ENCODE measurements at regions of chr15 and their contacts with region 1.

Region 1: DNA sequence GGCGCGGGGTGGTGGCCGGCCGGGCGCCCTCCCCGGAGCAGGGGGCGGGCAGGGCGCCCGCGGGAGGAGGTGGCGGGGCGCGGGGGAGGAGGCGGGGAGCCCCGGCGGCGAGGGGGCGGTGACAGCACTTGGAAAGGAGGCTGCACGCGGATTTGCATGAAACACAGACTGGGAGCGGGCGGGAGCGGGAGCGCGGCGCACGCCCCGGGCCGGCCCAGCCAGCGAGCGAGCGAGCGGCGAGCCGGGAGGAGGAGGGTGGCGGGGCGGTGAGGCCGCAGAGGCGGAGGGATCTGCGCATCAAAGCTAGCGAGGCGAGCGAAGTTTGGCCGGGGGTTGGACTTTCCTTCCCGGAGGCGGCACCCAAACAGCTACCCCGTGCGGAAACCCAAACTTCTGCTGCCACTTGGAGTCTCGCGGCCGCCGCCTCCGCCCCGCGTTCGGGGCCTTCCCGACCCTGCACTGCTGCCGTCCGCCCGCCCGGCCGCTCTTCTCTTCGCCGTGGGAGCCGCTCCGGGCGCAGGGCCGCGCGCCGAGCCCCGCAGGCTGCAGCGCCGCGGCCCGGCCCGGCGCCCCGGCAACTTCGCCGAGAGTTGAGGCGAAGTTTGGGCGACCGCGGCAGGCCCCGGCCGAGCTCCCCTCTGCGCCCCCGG is at the start of gene SMAD3:
- DNase-seq: peak; percentile 93
- H3K4me3 ChIP-seq: peak within 1 kb of the TSS; percentile 41 to 90 (median 78)
- H3K27ac ChIP-seq: peak within 1 kb of the TSS; percentile 92 to 96 (median 94)
- H3K4me1 ChIP-seq: peaks cover 40 to 72% (median 50%) of the 10 kb centered on the region in 4 donors
- H3K27me3 ChIP-seq: no peaks in the 10 kb centered on the region
- CTCF ChIP-seq: no peak
- EP300 ChIP-seq: no peak
- POLR2A ChIP-seq: peak; percentile 81
- total RNA-seq, gene SMAD3: 30.9 to 65.1 (median 57.0) TPM

Region 2: GRCh38 chr15:66545249-66545648 is 520.3 kb before region 1 on chr15:
- in situ Hi-C with region 1: no loop called
- intact Hi-C with region 1: no loop called
- DNase-seq: no peak
- H3K4me3 ChIP-seq: no peak overlapping the region
- H3K27ac ChIP-seq: no peak overlapping the region
- H3K4me1 ChIP-seq: no peaks in the 10 kb centered on the region
- H3K27me3 ChIP-seq: no peaks in the 10 kb centered on the region
- CTCF ChIP-seq: no peak
- EP300 ChIP-seq: no peak
- POLR2A ChIP-seq: no peak

Region 3: GRCh38 chr15:66735909-66736305 is 329.7 kb before region 1 on chr15:
- in situ Hi-C with region 1: no loop called
- intact Hi-C with region 1: no loop called
- DNase-seq: no peak
- H3K4me3 ChIP-seq: no peak overlapping the region
- H3K27ac ChIP-seq: no peak overlapping the region
- H3K4me1 ChIP-seq: peaks cover 7 to 34% (median 14%) of the 10 kb centered on the region in 4 donors
- H3K27me3 ChIP-seq: no peaks in the 10 kb centered on the region
- CTCF ChIP-seq: no peak
- EP300 ChIP-seq: no peak
- POLR2A ChIP-seq: no peak

Region 4: DNA sequence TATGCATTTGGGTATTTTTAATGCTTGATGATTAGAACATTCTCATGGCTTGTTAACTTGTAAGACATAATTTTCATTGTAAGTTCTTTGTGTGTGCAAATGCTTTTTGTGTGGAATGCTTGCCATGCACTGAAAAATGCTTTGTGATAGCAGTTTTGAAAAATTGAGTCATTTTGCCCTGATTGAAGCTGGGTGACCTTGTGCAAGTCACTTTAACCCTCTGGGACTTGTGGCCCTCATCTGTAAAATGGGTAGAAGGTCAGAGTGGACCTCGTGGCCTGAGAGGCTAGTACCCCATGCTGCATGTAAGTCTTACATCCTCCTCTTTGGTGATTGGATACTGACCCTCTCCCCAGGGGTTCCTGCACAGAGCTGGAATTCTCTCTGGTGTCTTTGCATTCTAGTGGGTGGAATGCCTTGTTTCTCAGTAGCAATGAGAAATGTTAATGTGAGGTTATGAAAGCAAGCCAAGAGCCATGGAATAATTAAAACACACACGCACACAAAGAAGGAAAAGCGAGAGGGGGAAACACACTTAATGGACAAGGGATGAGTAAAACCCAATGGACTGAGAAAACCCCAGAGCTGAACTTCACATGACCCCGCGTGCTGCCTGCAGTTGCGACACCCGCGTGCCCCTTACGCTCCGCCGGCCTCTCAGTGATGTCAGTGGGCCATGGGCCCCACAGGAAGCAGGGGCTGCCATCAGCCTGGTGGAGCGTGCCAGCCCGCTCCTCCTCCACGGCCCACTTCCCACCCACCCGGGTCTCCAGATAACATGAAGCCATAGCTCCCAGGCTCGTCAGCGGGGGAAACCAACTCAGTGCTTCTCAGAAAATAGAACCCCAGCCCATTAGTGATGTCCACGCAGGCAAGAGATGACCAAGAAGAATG is 43.8 kb after region 1 on chr15:
- in situ Hi-C with region 1: no loop called
- intact Hi-C with region 1: loop called (anchors 5 kb)
- DNase-seq: peak; percentile 65
- H3K4me3 ChIP-seq: no peak overlapping the region
- H3K27ac ChIP-seq: peak overlapping the region; percentile 58 to 80 (median 76)
- H3K4me1 ChIP-seq: peaks cover 38 to 57% (median 50%) of the 10 kb centered on the region in 4 donors
- H3K27me3 ChIP-seq: no peaks in the 10 kb centered on the region
- CTCF ChIP-seq: no peak
- EP300 ChIP-seq: no peak
- POLR2A ChIP-seq: no peak

Region 5: GRCh38 chr15:67174446-67174845 is 108.9 kb after region 1 on chr15:
- in situ Hi-C with region 1: no loop called
- intact Hi-C with region 1: no loop called
- DNase-seq: no peak
- H3K4me3 ChIP-seq: no peak overlapping the region
- H3K27ac ChIP-seq: no peak overlapping the region
- H3K4me1 ChIP-seq: peaks cover 0 to 36% (median 21%) of the 10 kb centered on the region in 4 donors
- H3K27me3 ChIP-seq: no peaks in the 10 kb centered on the region
- CTCF ChIP-seq: no peak
- EP300 ChIP-seq: no peak
- POLR2A ChIP-seq: no peak

Region 6: DNA sequence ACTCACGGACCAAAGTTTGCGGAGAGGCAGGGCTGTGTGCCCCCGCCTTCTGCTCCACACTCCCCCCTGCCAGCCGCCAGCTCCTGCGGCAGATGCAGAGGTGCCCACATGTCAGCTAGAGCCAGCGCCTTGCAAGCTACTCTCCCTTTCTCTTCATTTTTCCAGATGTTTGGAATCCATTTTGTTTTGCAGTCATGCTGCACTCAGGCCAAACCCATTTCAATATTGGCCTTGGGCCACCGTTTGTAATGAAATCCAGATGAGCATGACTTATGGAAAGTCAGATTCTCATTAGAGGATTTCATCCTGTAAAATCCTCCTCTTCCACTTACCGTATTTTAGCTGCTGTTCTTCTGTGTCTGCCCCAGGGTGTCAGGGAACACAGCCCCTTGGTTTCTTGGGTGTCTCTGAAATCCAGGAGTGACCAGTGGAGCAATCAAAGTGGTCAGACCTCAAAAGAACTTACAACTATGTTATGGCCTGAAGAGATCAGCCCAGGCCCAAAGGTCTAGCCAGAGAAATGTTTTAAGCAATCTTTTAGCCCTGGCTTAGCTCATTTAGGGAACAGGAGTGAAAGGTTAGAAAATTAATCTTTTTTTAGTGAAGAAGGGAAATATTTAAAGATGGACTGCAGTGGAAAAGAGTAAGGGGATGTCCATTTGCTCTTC is 123.1 kb after region 1 on chr15:
- in situ Hi-C with region 1: no loop called
- intact Hi-C with region 1: loop called (anchors 10 kb)
- DNase-seq: no peak
- H3K4me3 ChIP-seq: no peak overlapping the region
- H3K27ac ChIP-seq: peak overlapping the region; percentile 63 to 78 (median 72)
- H3K4me1 ChIP-seq: peaks cover 10 to 39% (median 18%) of the 10 kb centered on the region in 4 donors
- H3K27me3 ChIP-seq: no peaks in the 10 kb centered on the region
- CTCF ChIP-seq: no peak
- EP300 ChIP-seq: no peak
- POLR2A ChIP-seq: no peak

Region 7: DNA sequence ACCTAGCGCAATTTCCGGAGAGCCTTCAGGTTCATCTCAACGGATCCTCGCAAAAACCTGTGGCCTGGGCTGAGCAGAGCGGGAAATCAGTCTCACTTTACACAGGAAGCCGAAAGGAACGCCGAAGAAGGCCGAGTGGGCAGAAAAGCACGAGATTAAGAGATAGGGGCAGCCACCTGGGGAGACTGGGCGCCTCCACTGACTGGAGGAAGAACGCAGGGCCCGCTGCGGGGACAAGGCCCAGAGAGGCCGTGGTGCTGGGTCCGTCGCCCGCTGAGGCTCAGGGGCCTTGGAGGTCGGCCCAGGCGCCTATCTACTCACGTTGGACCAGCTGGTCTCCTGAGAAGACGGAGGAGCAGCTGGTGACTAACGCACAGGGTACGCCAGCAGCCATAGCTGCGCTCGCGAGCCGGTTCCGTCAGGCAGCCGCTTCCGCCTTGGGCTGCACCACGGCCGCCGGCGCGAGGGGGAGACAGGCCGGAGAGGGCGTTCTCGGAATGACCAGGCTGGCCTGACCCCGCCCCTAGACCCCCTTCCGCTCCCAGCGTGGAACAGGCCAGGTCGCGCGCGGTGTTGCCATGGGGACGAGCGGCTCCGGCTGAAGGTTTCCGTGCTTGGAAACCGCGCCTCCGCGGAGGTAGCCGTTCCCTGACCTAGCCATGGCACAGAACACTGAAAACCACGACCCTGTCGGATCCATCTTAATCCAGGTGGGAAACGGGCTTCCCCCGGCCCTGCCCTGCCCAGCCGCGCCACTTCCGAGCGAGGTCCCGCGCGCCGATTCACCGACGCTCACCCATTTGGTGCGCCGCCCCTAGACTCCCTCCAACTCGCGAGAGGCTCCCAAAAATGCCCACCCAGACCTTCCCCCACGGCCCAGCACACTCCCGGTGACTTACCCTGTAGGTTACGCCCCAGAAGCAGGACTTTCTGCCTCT is 188.9 kb after region 1 on chr15 and contains the starts of genes AAGAB and IQCH:
- in situ Hi-C with region 1: loop called in 1 of 4 experiments (anchors 10 kb)
- intact Hi-C with region 1: no loop called
- DNase-seq: peak; percentile 99
- H3K4me3 ChIP-seq: peak within 1 kb of the TSS; percentile 49 to 96 (median 88)
- H3K27ac ChIP-seq: peak within 1 kb of the TSS; percentile 90 to 98 (median 92)
- H3K4me1 ChIP-seq: peaks cover 4 to 29% (median 14%) of the 10 kb centered on the region in 4 donors
- H3K27me3 ChIP-seq: no peaks in the 10 kb centered on the region
- CTCF ChIP-seq: peak in 1 of 5 experiments; percentile 16
- EP300 ChIP-seq: no peak
- POLR2A ChIP-seq: peak; percentile 88
- total RNA-seq, gene AAGAB: 39.7 to 343 (median 54.1) TPM
- total RNA-seq, gene IQCH: 0.40 to 5.2 (median 1.9) TPM